ENCODE measurements at regions of chr17 and their contacts with region 1.

Region 1: GRCh38 chr17:43784628-43785101 is 4.4 kb downstream of the CFAP97D1 start:
- DNase-seq: no peak
- H3K4me3 ChIP-seq: no peak overlapping the region
- H3K27ac ChIP-seq: no peak overlapping the region
- H3K4me1 ChIP-seq: peaks cover 0 to 7% (median 0%) of the 10 kb centered on the region in 3 donors
- H3K27me3 ChIP-seq: peaks cover 0 to 10% (median 0%) of the 10 kb centered on the region in 4 donors
- CTCF ChIP-seq: no peak
- POLR2A ChIP-seq: no peak

Region 2: DNA sequence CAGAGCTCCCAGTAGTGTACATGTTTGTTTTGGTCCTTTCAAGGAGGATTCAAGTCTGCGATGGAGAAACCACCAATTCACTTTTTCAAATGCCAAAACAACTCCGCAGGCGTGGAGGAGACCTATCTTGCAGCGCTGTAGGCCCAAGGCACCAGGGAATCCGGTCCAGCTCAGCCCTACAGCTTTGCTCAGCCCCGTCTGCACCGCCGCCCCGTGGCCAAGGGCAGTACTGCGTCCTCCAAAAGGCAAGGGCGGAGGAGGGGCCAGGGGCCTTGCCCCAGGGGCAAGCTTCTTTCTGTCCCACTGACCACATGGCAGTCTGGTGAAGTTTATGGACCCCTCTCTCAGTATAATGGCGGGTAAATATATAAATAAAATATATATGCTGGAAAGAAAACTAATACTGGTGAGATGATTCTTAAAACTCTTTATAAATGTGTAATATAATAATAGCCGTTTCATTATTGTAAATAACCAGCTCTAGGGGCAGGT is 61.6 kb after region 1 on chr17:
- intact Hi-C with region 1: loop called (anchors 5 kb)
- DNase-seq: no peak
- H3K4me3 ChIP-seq: no peak overlapping the region
- H3K27ac ChIP-seq: peak overlapping the region in 3 of 4 donors; percentile 16 to 33 (median 27)
- H3K4me1 ChIP-seq: peaks cover 0 to 27% (median 0%) of the 10 kb centered on the region in 3 donors
- H3K27me3 ChIP-seq: peaks cover 0 to 15% (median 0%) of the 10 kb centered on the region in 4 donors
- CTCF ChIP-seq: peak; percentile 79 to 99 (median 98)
- POLR2A ChIP-seq: no peak

Measured in esophagus squamous epithelium (tissue), 5 donors.